Right ventricle myocardium superior (tissue), 1 donor: ENCODE measurements at regions of chr5 and their contacts with region 1.

Region 1: GRCh38 chr5:139293504-139294373 is at the start of gene MATR3:
- DNase-seq: peak; percentile 97
- ATAC-seq: peak; percentile 97
- total RNA-seq, gene MATR3: 111 TPM

Region 2: DNA sequence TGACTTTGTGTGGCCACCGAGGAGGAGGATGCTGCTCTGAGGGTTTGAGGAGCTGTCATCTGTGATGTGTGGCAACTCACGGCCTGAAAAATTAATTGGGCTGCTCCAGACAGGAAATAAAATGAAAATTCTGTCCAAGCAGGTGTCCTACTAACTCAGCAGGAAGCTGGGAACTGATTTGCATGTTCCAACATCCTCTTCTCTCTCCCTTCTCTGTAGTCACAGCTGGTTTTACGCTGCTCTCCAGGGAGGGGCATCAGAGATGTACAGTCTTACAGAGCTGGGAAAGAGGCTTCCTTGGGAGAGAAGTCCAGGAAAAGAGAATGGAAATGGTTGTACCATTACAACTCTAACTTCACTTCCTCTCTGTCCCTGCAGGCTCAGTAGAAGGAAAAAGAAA is 71.4 kb before region 1 on chr5:
- intact Hi-C with region 1: no loop called
- DNase-seq: no peak
- ATAC-seq: no peak

Region 3: DNA sequence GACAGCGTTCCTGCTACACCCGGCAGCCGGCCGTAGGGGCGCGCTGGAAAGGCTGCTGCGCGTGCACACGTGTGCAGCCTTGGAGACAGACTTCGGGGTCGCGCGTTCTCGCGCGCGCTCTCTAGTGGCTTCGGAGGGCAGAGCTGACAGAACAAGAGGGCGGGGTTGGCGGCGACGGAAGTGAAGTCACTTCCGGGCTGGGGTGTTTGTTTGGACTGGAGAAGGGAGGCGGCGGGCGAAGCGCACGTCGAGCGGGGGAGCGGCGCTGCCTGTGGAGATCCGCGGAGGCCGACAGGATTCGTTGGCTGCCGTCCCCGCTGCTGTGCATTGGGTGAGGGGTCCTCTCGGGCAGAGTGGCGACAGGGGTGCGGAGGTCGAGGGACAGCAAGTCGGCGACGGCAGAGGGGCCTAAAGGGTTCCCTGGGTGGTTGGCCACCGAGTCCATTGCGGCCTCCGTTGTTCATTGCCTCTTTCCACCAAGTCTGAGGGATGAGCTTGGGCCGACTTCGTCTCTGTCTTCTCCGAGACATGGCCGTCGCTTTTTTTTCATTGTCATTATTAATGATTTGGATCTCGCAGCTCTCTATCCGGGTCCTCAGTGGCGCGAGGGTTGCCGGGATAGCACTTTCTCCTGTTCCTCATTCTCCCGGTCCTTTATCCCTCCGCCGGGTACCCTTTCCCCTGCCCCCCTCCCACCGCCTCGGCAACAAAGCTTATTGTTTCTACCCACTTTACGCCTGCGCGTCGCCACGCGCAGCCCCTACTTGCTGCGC is 48.1 kb after region 1 on chr5 and contains the start of gene PAIP2:
- intact Hi-C with region 1: loop called (anchors 10 kb)
- DNase-seq: peak; percentile 99
- ATAC-seq: peak; percentile 98
- total RNA-seq, gene PAIP2: 142 TPM

Region 4: GRCh38 chr5:139417214-139417613 is 123.5 kb after region 1 on chr5:
- intact Hi-C with region 1: loop called (anchors 10 kb)
- DNase-seq: peak; percentile 51
- ATAC-seq: peak; percentile 68

Region 5: DNA sequence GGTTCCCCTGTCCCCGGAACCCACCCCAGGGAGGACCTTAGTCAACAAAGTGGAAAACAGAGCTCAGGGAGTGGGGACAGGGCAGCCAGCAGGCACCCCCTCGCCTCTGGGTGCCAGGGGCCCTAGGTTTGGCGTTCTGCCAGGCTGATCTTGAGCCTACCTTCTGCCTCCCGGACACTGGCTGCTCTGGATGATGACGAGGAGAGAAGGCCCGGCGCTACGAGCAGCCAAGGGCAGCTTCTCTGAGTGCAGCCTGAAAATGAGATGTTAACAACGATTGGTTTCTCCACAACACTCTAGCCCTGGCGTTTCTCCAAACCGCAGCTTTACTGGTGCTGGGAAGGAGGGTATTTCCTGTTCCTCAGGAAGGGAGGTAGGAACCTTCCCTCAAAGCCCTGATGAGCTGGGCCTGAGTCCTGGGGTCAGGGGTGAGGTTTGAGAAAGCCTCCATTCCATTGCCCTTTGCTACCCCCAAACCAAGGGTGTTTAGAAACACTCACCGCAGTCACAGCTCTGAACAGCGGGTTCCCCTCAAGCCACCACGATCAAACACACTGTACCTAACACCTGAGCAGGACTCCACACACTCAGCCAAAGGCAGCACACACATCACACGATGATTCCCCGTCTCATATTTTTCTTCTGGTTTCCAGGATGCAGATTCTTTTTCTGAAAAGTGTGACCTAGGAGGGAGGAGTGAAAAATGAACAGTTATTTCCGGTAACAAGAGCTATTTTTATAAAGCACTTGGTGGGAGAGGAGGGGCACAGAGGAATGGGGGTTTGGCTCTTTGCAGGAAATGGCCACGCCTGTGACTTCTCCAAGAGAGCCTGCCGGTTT is 188.5 kb after region 1 on chr5 and contains the start of gene STING1:
- intact Hi-C with region 1: no loop called
- DNase-seq: peak; percentile 88
- ATAC-seq: peak; percentile 84
- total RNA-seq, gene STING1: 39.0 TPM